Dendritic cell treated with granulocyte-macrophage colony-stimulating factor and Interleukin-4, amounts not matched to agents 40 ng/mL and 50 ng/mL, for 4 days (primary cell): ENCODE measurements at regions of chr1 and their contacts with region 1.

Region 1: GRCh38 chr1:156751758-156752757 is 583 bp upstream of the HDGF start:
- H3K4me3 Mint-ChIP-seq: peak overlapping the region; percentile 91
- H3K27ac Mint-ChIP-seq: peak overlapping the region; percentile 92
- H3K4me1 Mint-ChIP-seq: peaks cover 46% of the 10 kb centered on the region
- H3K27me3 Mint-ChIP-seq: no peaks in the 10 kb centered on the region

Region 2: GRCh38 chr1:156767101-156767878 is 15.2 kb after region 1 on chr1 and contains the start of gene PRCC:
- intact Hi-C with region 1: loop called (anchors 1 kb)
- H3K4me3 Mint-ChIP-seq: no peak within 1 kb of the TSS
- H3K27ac Mint-ChIP-seq: no peak within 1 kb of the TSS
- H3K4me1 Mint-ChIP-seq: peaks cover 53% of the 10 kb centered on the region
- H3K27me3 Mint-ChIP-seq: no peaks in the 10 kb centered on the region